ENCODE measurements at regions of chr1 and their contacts with region 1.

Region 1: DNA sequence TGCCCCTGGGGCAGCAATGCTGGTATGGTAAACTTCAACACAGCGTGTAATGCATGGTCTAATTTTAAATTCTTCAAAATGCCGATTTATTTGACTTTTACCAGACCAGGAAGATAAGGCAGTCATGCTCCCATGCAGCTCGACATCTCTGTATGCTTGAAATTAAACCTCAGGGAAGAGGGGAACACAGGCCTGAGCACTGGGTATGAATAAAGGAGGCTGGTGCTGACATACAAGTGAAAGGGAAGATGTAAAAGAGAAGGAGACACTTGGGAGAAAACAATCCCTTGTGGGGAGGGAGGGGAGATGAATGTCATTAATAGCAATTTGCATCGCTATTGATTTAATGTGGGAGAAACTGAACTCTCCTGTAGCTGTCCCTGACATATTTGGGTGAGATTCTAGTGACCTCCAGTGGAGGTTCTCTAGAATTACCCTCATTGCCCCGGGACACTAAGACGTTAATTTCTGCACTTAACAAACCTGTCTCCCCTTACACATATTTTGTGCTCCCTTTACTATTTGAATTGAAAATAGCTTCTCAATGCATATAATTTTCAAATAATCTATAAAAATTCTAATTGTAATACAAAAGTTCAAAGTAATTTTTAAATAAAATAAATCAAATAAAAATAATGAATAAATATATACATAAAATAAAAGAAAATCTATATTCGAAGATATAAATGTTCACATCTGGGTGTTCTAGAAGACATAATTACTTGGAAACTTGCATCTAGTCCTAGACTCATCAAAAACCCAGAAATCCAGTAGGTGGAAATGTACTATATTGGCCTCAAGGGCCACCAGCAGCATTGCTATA is 283.1 kb downstream of the LMX1A start:
- DNase-seq: peak; percentile 47 to 84
- H3K4me3 ChIP-seq: no peak overlapping the region
- H3K4me1 ChIP-seq: peaks cover 16% of the 10 kb centered on the region
- H3K27me3 ChIP-seq: no peaks in the 10 kb centered on the region

Region 2: DNA sequence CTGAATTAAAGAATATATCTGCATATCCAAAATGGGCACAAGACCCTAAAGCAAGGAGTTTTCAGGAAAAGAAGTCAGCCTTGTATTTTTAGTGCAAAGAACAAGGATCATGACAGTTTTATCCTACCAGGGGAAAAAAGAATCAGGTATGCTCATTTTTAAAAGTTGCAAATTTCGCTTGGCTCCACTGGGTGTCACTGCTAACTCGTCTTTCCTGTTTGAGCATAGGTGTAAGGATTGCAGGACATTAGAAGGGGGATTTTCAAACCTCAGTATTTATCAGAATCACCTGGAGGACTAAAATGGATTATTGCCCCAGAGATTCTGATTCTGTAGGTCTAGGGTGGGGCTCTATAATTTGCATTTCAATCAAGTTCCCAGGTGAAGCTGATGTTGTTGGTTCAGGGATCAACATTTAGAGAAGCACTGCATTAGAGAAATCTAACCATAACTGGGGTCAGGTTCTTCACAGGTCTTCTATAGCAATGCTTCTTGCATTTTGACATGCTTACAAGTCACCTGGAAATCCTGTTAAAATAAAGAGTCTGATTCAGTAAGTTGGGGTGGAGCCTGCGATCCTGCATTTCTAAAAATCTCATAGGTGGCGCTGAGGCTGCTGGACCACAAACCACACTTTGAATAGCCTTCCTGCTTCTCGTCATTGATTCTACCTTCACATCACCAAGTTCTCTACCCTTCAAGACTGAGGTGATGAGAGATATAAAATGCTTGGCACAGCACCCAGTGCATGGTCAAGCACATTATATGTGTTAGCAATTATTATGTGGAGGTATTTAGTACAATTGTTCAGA is 1712.1 kb before region 1 on chr1:
- in situ Hi-C with region 1: loop called (anchors 25 kb)
- DNase-seq: peak; percentile 14 to 18
- H3K4me3 ChIP-seq: no peak overlapping the region
- H3K4me1 ChIP-seq: no peaks in the 10 kb centered on the region
- H3K27me3 ChIP-seq: 0 out of 2 replicates have a peak, but pooled peaks cover 2% of the 10 kb centered on the region

Region 3: DNA sequence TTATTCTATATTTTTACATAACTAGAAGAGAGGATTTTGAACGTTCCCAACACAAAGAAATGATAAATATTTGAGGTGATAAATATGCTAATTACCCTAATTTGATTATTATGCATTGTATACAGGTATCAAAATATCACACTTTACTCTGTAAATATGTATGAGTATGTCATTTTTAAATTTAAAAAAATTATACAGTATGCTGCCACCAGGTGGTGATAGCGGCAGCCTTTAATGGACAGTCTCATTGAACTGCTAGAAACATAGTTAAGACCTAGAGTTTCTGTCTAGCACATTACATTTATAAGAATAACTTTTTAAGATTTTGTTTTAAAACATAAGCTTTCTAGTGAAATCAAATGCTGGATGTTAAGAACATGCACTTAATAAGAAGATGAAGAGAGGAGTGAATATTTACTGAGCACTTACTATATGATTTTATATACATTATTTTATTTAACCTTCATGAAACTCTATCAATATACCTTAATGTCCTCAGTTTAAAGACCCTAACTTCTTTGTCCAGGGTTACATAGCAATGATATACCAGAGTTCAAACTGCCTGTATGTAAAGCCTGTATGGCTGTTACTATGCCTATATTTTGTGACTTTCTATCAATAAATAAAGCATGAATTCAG is 1544.6 kb before region 1 on chr1:
- in situ Hi-C with region 1: loop called (anchors 25 kb)
- DNase-seq: peak; percentile 19 to 46
- H3K4me3 ChIP-seq: no peak overlapping the region
- H3K4me1 ChIP-seq: no peaks in the 10 kb centered on the region
- H3K27me3 ChIP-seq: no peaks in the 10 kb centered on the region

Region 4: DNA sequence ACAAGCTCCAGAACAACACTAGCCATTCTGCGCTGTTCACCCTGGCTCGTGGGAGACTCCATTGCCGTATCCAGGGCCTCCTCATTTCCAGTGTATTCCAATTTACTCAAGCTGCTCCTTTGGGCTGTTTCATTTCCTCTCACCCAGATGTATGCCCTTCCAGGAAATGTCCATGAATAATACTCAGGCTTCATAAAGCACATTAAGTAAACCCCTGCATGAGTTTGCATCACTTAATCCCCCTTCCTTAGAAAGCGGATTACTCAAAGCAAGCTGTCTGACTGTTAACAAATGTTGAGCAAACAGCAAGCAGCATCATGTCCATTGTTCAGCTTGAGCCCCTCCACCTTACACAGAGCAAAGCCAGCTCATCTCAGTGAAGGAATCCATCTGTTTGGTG is 918.0 kb before region 1 on chr1:
- in situ Hi-C with region 1: loop called (anchors 25 kb)
- DNase-seq: no peak
- H3K4me3 ChIP-seq: no peak overlapping the region
- H3K4me1 ChIP-seq: no peaks in the 10 kb centered on the region
- H3K27me3 ChIP-seq: no peaks in the 10 kb centered on the region